Right ventricle myocardium superior (tissue), 1 donor: ENCODE measurements at regions of chr2 and their contacts with region 1.

Region 1: DNA sequence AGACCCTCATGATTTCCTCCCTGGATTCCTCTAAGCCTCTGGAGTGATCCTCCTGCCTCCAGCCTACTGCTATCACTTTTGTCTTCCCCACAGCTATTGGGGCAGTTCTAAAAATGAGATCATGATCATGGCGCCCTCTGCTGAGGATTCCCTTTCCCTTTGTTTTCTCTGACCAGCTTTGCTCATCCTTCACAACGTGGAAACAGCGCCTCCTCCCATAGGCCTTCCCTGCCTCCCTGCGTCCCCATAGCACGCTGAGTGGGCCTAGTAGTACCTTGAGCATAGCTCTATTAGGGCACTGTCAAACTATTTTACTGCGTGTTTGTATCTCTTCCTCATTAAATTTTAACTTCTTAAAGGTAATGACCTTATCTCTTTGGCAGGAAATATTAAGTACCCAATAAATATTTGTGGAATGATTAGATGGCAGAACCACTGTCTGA is 207.0 kb upstream of the FANCL start:
- DNase-seq: peak; percentile 43
- ATAC-seq: peak; percentile 65

Region 2: DNA sequence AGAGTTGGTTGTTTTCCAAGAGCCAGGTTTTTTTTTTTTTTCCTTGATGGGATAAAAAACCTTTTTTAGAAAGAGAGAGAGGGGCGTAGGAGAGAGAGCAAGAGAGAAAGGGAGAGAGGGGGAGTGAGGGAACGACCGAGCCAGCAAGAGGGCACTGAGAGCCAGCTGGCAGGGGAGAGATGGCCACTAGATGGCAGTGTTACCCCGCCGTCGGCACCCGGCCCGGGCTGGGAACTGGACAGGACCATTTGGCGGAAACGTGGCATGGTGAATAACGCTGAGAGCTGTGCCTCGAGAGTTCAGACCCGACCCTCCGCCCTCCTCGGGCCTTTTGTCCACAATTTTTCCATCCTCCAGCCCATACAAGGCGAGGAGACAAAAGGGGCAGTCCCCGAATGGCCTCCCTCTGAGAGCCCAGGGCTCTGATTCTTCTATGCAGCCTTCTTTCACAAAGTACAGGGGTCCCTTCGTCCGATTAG is 688.2 kb before region 1 on chr2:
- intact Hi-C with region 1: loop called (anchors 10 kb)
- DNase-seq: peak; percentile 90
- ATAC-seq: peak; percentile 100

Region 3: DNA sequence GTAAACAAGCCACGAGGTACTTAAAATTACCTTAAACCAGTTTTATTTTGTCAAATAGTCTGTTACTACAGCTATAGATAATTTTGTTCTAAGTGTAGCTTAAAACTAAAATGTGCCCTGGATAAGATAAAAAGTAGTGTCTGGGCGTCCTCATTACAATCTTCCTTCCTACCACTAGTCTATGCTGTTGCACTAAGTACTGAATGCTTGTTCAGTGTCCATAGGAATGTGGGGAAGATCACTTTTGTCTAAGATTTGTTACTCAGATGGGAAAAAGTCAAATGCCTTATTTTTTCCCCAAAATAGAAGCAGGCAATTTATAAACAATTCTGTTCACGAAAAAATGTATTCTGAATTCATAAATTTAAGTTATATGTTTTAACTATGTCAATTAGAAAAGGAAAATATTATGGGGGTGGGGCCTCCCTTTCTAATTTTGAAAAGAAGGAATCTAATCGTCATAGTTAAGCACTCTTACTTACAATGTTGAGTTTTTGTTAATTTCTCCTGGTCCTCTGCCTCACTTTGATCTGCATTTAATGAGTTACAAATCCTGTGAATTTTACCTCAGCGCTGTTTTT is 541.8 kb before region 1 on chr2:
- intact Hi-C with region 1: loop called (anchors 10 kb)
- DNase-seq: no peak
- ATAC-seq: peak; percentile 84

Region 4: DNA sequence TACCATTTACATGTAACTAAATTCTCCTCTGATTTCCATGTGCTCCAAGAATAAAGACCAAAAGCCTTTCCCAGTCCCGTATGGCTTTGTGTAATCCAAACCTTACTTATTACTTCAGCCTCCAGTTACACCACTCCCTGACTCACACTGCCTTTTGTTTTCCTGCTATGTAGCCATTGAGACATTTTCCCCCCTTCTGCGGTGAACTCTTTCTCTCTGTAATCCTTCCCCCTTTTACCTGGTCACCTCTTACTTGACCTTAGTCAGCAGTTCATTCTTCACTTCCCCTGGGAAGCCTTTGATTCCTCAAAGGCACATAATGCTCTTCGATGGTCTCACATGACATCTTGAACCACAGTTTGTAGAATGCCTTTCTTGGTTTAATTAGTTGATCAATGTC is 49.1 kb after region 1 on chr2:
- intact Hi-C with region 1: no loop called
- DNase-seq: no peak
- ATAC-seq: no peak